GM10248 (cell line): ENCODE measurements at regions of chr9 and their contacts with region 1.

Region 1: GRCh38 chr9:1869843-1870242 is 145.3 kb upstream of the SMARCA2 start:
- DNase-seq: no peak
- CTCF ChIP-seq: peak; percentile 67

Region 2: DNA sequence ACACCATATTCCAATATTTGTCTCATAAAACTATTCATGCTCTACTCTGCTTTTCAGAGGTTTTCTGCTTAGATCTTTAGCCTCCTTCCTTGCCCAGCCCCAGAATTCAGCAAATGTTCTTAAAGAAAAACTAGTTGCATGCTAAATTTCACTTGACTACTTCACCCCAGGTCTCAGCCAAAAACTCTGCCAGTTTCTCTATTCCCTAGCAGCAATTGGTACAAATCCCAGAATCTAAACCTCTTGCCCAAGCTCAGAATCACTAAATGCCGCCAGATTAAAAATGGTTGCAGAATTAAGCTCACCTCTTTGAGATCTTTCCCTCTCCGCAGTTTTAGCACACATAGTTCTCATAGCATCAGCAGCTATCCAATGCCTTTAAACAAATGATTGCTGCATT is 185.9 kb before region 1 on chr9:
- CTCF ChIA-PET with region 1: no interaction called
- POLR2A ChIA-PET with region 1: no interaction called
- DNase-seq: no peak
- CTCF ChIP-seq: no peak

Region 3: GRCh38 chr9:1837449-1838084 is 32.3 kb before region 1 on chr9:
- CTCF ChIA-PET with region 1: interaction called, 24 read pairs
- POLR2A ChIA-PET with region 1: no interaction called
- DNase-seq: peak; percentile 51
- CTCF ChIP-seq: peak; percentile 48

Region 4: GRCh38 chr9:1857808-1858207 is 12.0 kb before region 1 on chr9:
- CTCF ChIA-PET with region 1: interaction called, 13 read pairs
- POLR2A ChIA-PET with region 1: no interaction called
- DNase-seq: no peak
- CTCF ChIP-seq: no peak

Region 5: GRCh38 chr9:1895946-1896345 is 26.1 kb after region 1 on chr9:
- CTCF ChIA-PET with region 1: no interaction called
- POLR2A ChIA-PET with region 1: no interaction called
- DNase-seq: no peak
- CTCF ChIP-seq: no peak